ENCODE measurements at regions of chr6 and their contacts with region 1.

Region 1: GRCh38 chr6:71349395-71349794 is 60.8 kb downstream of the OGFRL1 start:
- DNase-seq: no peak
- ATAC-seq: no peak

Region 2: DNA sequence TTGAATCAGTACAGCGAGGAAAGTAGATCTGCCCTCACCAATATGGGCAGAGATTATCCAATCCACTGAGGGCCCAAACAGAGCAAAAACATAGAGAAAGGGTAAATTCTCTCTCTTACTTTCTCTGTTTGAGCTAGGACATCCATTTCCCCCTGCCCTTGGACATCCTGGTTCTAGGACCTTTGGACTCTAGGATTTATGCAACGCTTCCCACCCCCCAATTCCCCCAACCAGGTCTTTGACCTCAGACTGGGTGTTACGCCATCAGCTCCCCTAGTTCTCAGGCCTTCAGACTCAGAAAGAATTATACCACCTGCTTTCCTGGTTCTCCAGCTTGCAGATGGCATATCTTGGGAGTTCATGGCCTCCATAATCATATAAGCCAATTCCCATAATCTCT is 382.3 kb before region 1 on chr6:
- intact Hi-C with region 1: no loop called
- DNase-seq: no peak
- ATAC-seq: no peak

Region 3: GRCh38 chr6:71190809-71191208 is 158.6 kb before region 1 on chr6:
- intact Hi-C with region 1: loop called (anchors 10 kb)
- DNase-seq: no peak
- ATAC-seq: no peak

Region 4: DNA sequence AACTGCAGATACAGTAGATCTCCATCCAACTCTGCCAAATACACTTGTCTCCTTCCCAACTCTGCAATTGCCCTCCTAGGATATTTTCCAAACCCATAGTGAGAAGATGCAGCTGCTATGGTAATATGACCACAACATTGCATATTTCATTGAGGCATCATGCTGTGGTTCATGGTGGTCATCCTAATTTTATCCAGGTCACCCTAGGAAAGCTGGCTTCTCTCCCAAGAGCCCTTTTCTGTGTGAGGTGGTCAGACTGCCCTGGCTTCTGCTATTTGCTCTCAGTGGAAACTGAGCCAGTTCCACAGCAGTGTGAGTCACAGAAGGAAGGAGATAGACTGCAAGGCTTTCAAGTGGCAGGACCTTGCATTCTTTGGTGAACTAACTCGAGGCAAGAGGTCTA is 55.3 kb before region 1 on chr6:
- intact Hi-C with region 1: loop called in 1 of 2 experiments (anchors 5 kb)
- DNase-seq: no peak
- ATAC-seq: peak; percentile 44 to 76